ENCODE measurements at regions of chr15 and their contacts with region 1.

Region 1: GRCh38 chr15:78108299-78109084 is 16.1 kb downstream of the SH2D7 start:
- DNase-seq: peak; percentile 71 to 91 (median 82)
- ATAC-seq: peak; percentile 77 to 88 (median 82)
- H3K4me3 ChIP-seq: no peak overlapping the region
- H3K4me3 Mint-ChIP-seq: no peak overlapping the region
- H3K27ac ChIP-seq: no peak overlapping the region
- H3K27ac Mint-ChIP-seq: no peak overlapping the region
- H3K4me1 ChIP-seq: peaks cover 11 to 37% of the 10 kb centered on the region in 2 experiments
- H3K4me1 Mint-ChIP-seq: peaks cover 30 to 45% (median 33%) of the 10 kb centered on the region in 3 donors
- H3K27me3 ChIP-seq: peaks cover 0 to 3% of the 10 kb centered on the region in 2 experiments
- H3K27me3 Mint-ChIP-seq: no peaks in the 10 kb centered on the region

Region 2: GRCh38 chr15:77475898-77476297 is 632.6 kb before region 1 on chr15:
- CTCF ChIA-PET with region 1: no interaction called
- POLR2A ChIA-PET with region 1: no interaction called
- DNase-seq: no peak
- ATAC-seq: no peak
- H3K4me3 ChIP-seq: no peak overlapping the region
- H3K4me3 Mint-ChIP-seq: no peak overlapping the region
- H3K27ac ChIP-seq: no peak overlapping the region
- H3K27ac Mint-ChIP-seq: no peak overlapping the region
- H3K4me1 ChIP-seq: no peaks in the 10 kb centered on the region
- H3K4me1 Mint-ChIP-seq: no peaks in the 10 kb centered on the region
- H3K27me3 ChIP-seq: no peaks in the 10 kb centered on the region
- H3K27me3 Mint-ChIP-seq: no peaks in the 10 kb centered on the region

Region 3: GRCh38 chr15:77959432-77959879 is 149.0 kb before region 1 on chr15:
- CTCF ChIA-PET with region 1: interaction called, 16 to 40 read pairs
- POLR2A ChIA-PET with region 1: no interaction called
- DNase-seq: peak; percentile 15 to 77 (median 62)
- ATAC-seq: peak; percentile 93 to 99 (median 96)
- H3K4me3 ChIP-seq: no peak overlapping the region
- H3K4me3 Mint-ChIP-seq: peak overlapping the region in 1 of 3 donors; percentile 21
- H3K27ac ChIP-seq: no peak overlapping the region
- H3K27ac Mint-ChIP-seq: no peak overlapping the region
- H3K4me1 ChIP-seq: peaks cover 0 to 5% of the 10 kb centered on the region in 2 experiments
- H3K4me1 Mint-ChIP-seq: peaks cover 1 to 7% (median 5%) of the 10 kb centered on the region in 3 donors
- H3K27me3 ChIP-seq: peaks cover 0 to 6% of the 10 kb centered on the region in 2 experiments
- H3K27me3 Mint-ChIP-seq: peaks cover 0 to 9% of the 10 kb centered on the region in 2 donors

Region 4: GRCh38 chr15:78000091-78000926 is 108.2 kb before region 1 on chr15:
- CTCF ChIA-PET with region 1: interaction called, 10 to 15 read pairs
- POLR2A ChIA-PET with region 1: no interaction called
- DNase-seq: peak; percentile 53 to 86 (median 75)
- ATAC-seq: peak; percentile 93 to 100 (median 96)
- H3K4me3 ChIP-seq: no peak overlapping the region
- H3K4me3 Mint-ChIP-seq: no peak overlapping the region
- H3K27ac ChIP-seq: no peak overlapping the region
- H3K27ac Mint-ChIP-seq: peak overlapping the region; percentile 66 to 79
- H3K4me1 ChIP-seq: no peaks in the 10 kb centered on the region
- H3K4me1 Mint-ChIP-seq: peaks cover 3 to 11% (median 7%) of the 10 kb centered on the region in 3 donors
- H3K27me3 ChIP-seq: no peaks in the 10 kb centered on the region
- H3K27me3 Mint-ChIP-seq: no peaks in the 10 kb centered on the region

Region 5: GRCh38 chr15:78072080-78072892 is 36.2 kb before region 1 on chr15:
- CTCF ChIA-PET with region 1: interaction called in 1 of 2 experiments, 12 read pairs
- POLR2A ChIA-PET with region 1: no interaction called
- DNase-seq: peak in 26 of 35 experiments; percentile 13 to 78 (median 40)
- ATAC-seq: peak in 1 of 4 experiments; percentile 73
- H3K4me3 ChIP-seq: no peak overlapping the region
- H3K4me3 Mint-ChIP-seq: peak overlapping the region; percentile 9 to 65 (median 56)
- H3K27ac ChIP-seq: peak overlapping the region; percentile 60
- H3K27ac Mint-ChIP-seq: no peak overlapping the region
- H3K4me1 ChIP-seq: peaks cover 59 to 73% of the 10 kb centered on the region in 2 experiments
- H3K4me1 Mint-ChIP-seq: peaks cover 45 to 52% (median 49%) of the 10 kb centered on the region in 3 donors
- H3K27me3 ChIP-seq: no peaks in the 10 kb centered on the region
- H3K27me3 Mint-ChIP-seq: no peaks in the 10 kb centered on the region

Region 6: DNA sequence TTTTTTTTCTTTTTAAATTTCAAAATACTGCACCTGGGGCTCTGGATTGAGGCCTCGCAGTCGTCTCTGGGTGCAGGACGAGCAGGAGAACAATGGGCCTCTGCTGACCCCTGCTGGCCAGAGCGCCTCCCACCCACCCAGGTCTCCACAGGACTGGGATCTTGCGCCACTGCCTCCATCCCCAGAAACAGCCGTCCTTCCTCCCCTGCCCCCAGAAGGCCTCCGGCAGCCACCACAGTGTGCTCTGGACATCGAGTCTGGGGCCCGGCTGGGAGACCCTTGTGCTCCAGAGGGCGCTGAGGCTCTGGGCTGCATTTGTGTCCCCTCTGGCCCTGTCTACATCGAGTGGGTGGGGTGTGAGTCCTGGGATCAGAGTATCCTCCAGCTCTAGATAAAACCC is 132.5 kb after region 1 on chr15:
- CTCF ChIA-PET with region 1: interaction called, 5 to 39 read pairs
- POLR2A ChIA-PET with region 1: no interaction called
- DNase-seq: peak; percentile 46 to 86 (median 75)
- ATAC-seq: peak; percentile 88 to 97 (median 94)
- H3K4me3 ChIP-seq: no peak overlapping the region
- H3K4me3 Mint-ChIP-seq: no peak overlapping the region
- H3K27ac ChIP-seq: no peak overlapping the region
- H3K27ac Mint-ChIP-seq: peak overlapping the region in 1 of 2 donors; percentile 22
- H3K4me1 ChIP-seq: peaks cover 0 to 4% of the 10 kb centered on the region in 2 experiments
- H3K4me1 Mint-ChIP-seq: peaks cover 0 to 2% (median 2%) of the 10 kb centered on the region in 3 donors
- H3K27me3 ChIP-seq: peaks cover 0 to 8% of the 10 kb centered on the region in 2 experiments
- H3K27me3 Mint-ChIP-seq: peaks cover 2 to 3% of the 10 kb centered on the region in 2 donors